A673 (cell line): ENCODE measurements at regions of chr6 and their contacts with region 1.

Region 1: GRCh38 chr6:148304976-148305375 is 37.7 kb upstream of the SASH1 start:
- DNase-seq: peak; percentile 80
- H3K4me3 ChIP-seq: no peak overlapping the region
- H3K27ac ChIP-seq: no peak overlapping the region
- H3K4me1 ChIP-seq: no peaks in the 10 kb centered on the region
- H3K27me3 ChIP-seq: no peaks in the 10 kb centered on the region
- CTCF ChIP-seq: no peak

Region 2: GRCh38 chr6:148293181-148293995 is 11.6 kb before region 1 on chr6:
- CTCF ChIA-PET with region 1: no interaction called
- POLR2A ChIA-PET with region 1: no interaction called
- intact Hi-C with region 1: no loop called
- DNase-seq: no peak
- H3K4me3 ChIP-seq: no peak overlapping the region
- H3K27ac ChIP-seq: no peak overlapping the region
- H3K4me1 ChIP-seq: no peaks in the 10 kb centered on the region
- H3K27me3 ChIP-seq: no peaks in the 10 kb centered on the region
- CTCF ChIP-seq: no peak

Region 3: DNA sequence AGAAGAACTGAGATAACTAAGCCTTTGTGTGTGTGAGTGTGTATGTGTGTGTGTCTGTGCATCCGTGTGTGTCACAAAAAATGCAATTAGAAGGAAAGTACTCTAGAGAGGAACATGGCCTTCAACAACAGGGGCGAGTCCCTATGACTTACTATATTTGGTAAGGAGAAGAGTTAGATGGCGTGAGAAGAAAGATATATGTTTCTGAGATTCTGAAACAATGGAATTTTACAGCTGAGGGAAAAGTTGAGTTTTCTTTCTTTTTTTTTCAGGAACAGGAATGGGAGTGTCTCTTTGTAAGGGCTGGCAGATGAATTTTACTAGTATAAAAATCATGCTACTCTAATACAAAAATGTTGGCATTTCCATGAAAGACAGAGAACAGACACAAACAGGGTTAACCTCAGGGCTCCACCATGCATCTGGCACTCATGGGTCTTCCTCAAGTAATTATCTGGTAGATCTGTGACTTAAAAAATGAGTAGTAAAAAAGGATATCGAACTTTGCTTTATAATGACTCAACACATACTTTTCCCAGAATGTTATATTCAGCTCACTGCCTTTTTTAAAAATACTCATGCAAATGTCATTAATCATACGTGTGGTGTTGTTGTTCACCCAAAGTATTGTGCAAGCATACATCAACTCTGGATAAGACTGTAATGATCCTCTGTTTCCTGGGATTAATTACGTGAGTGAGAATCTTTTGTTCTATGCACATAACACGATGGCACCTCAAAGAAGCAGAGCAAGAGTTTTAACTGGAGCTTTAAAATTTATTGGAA is 24.8 kb after region 1 on chr6:
- CTCF ChIA-PET with region 1: no interaction called
- POLR2A ChIA-PET with region 1: interaction called, 13 read pairs
- intact Hi-C with region 1: no loop called
- DNase-seq: peak; percentile 65
- H3K4me3 ChIP-seq: no peak overlapping the region
- H3K27ac ChIP-seq: peak overlapping the region; percentile 55
- H3K4me1 ChIP-seq: peaks cover 39% of the 10 kb centered on the region
- H3K27me3 ChIP-seq: no peaks in the 10 kb centered on the region
- CTCF ChIP-seq: no peak

Region 4: DNA sequence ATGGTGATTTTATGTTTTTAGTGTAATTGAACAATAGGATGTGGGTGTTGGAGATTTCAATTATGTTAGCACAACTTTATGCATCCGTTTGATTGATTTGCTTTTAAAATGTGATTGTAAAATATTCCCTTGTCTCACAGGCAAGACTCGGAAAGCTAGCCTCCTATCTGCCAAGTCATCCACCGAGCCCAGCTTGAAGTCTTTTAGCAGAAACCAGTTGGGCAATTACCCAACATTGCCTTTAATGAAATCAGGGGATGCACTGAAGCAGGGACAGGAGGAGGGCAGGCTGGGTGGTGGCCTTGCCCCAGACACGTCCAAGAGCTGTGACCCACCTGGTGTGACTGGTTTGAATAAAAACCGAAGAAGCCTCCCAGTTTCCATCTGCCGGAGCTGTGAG is 238.6 kb after region 1 on chr6:
- CTCF ChIA-PET with region 1: no interaction called
- POLR2A ChIA-PET with region 1: interaction called, 26 read pairs
- intact Hi-C with region 1: no loop called
- DNase-seq: no peak
- H3K4me3 ChIP-seq: no peak overlapping the region
- H3K27ac ChIP-seq: no peak overlapping the region
- H3K4me1 ChIP-seq: no peaks in the 10 kb centered on the region
- H3K27me3 ChIP-seq: no peaks in the 10 kb centered on the region
- CTCF ChIP-seq: no peak